ENCODE measurements at regions of chr22 and their contacts with region 1.

Region 1: GRCh38 chr22:31944700-31945474 is 552 bp downstream of the YWHAH start:
- DNase-seq: peak; percentile 65 to 78 (median 72)
- ATAC-seq: peak; percentile 67
- H3K4me3 ChIP-seq: peak overlapping the region; percentile 96
- H3K27ac ChIP-seq: peak overlapping the region; percentile 98
- H3K4me1 ChIP-seq: peaks cover 19 to 27% of the 10 kb centered on the region in 2 experiments
- H3K27me3 ChIP-seq: no peaks in the 10 kb centered on the region
- CTCF ChIP-seq: no peak
- EP300 ChIP-seq: no peak
- POLR2A ChIP-seq: no peak
- RAD21 ChIP-seq: no peak

Region 2: DNA sequence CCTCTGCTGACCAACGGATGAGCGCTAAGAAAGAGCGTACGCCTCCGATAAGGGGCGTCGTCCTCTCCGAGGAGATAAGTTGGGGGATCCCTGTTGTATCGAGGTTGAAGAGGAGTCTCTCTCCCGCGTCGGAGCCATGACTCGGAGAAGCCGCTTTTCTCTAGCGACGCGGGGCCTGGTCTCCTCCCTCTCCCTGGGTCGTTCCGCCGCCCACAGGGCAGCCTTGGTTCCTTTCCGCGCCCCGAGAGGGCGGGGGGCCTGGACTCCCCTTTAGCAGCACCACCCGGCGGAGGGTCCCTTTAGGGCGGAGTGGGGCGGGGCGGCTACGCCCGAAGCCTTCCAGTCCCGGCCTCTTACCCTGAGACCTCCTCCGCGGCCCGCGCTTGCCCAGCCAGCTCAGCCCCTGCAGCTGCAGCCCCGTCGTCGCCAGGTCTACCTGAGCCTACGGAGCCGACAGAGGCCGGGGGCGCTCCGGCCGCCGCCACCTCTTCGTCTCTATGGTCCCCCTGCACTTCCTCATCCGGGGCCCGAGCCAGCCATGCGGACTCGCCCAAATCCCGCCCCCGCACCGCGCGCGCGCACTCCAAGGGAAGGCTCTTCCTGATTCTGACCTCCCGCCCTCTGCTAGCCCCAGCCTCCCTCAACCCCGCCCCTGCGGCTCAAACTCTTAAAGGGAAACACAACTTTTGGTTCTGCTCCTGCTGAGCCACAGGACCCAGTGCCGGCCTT is 195.1 kb before region 1 on chr22 and contains the start of gene PRR14L:
- CTCF ChIA-PET with region 1: no interaction called
- POLR2A ChIA-PET with region 1: no interaction called
- in situ Hi-C with region 1: no loop called
- intact Hi-C with region 1: loop called (anchors 5 kb)
- DNase-seq: peak; percentile 82 to 97 (median 88)
- ATAC-seq: peak; percentile 79
- H3K4me3 ChIP-seq: peak within 1 kb of the TSS; percentile 90
- H3K27ac ChIP-seq: peak within 1 kb of the TSS; percentile 89
- H3K4me1 ChIP-seq: peaks cover 34 to 38% of the 10 kb centered on the region in 2 experiments
- H3K27me3 ChIP-seq: no peaks in the 10 kb centered on the region
- CTCF ChIP-seq: peak in 1 of 3 experiments; percentile 21; a peak in 1 of 6 replicates
- EP300 ChIP-seq: peak; percentile 32; the same call in 1 of the 2 replicates
- POLR2A ChIP-seq: peak; percentile 89
- RAD21 ChIP-seq: no peak
- polyA plus RNA-seq, gene PRR14L: 2.8 to 6.8 TPM

Region 3: GRCh38 chr22:31872209-31872608 is 72.7 kb before region 1 on chr22:
- CTCF ChIA-PET with region 1: interaction called, 7 read pairs
- POLR2A ChIA-PET with region 1: interaction called, 5 read pairs
- in situ Hi-C with region 1: loop called (anchors 5 kb)
- intact Hi-C with region 1: loop called (anchors 1 kb)
- DNase-seq: peak; percentile 39 to 76 (median 56)
- ATAC-seq: peak; percentile 95
- H3K4me3 ChIP-seq: no peak overlapping the region
- H3K27ac ChIP-seq: no peak overlapping the region
- H3K4me1 ChIP-seq: peaks cover 3 to 15% of the 10 kb centered on the region in 2 experiments; a peak in 3 of 5 replicates
- H3K27me3 ChIP-seq: no peaks in the 10 kb centered on the region
- CTCF ChIP-seq: peak; percentile 66 to 80 (median 74)
- EP300 ChIP-seq: no peak
- POLR2A ChIP-seq: no peak
- RAD21 ChIP-seq: peak; percentile 78 to 93

Region 4: DNA sequence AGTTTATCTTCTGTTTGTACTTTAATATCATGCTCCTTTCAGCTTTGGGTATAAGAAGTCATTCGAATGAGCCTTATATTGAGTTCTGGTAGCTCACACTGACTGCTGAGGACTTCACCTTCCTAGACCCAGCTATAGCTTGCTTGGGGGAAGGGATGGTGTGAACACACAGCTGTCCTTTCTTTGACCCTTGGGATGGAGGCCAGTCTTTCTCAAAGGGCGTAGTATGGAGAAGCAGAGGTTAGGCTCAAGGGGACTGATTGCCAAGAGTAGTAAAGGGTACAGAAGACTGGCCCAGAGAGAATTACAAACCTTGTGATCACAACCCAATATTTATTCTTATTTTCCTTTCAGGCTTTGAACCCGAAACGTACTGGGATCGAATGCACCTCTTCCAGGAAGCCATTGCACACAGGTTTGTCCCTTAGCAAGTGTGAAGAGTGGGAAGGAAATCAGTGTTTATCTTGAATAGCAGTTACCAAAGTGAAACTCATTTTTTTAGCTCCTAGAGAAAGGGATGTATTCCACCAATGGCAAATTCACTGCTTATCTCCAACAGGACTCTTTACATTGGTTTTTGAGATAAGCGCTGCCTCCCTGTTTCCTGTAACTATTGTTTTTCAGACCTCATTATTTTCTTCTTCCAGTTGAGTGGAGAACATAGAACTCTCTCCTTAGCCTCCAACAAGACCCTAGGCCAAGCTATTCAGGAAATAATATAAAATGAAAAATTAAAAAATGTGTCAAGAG is 43.3 kb before region 1 on chr22:
- CTCF ChIA-PET with region 1: no interaction called
- POLR2A ChIA-PET with region 1: interaction called, 3 read pairs
- in situ Hi-C with region 1: no loop called
- intact Hi-C with region 1: loop called (anchors 1 kb)
- DNase-seq: peak; percentile 51 to 77 (median 56)
- ATAC-seq: peak; percentile 75
- H3K4me3 ChIP-seq: no peak overlapping the region; the same call in 1 of the 2 replicates
- H3K27ac ChIP-seq: peak overlapping the region; percentile 73
- H3K4me1 ChIP-seq: peaks cover 33 to 44% of the 10 kb centered on the region in 2 experiments
- H3K27me3 ChIP-seq: no peaks in the 10 kb centered on the region
- CTCF ChIP-seq: no peak
- EP300 ChIP-seq: peak; percentile 81
- POLR2A ChIP-seq: no peak
- RAD21 ChIP-seq: no peak; a peak in 1 of 4 replicates

Region 5: GRCh38 chr22:32063701-32064100 is 118.8 kb after region 1 on chr22:
- CTCF ChIA-PET with region 1: no interaction called
- POLR2A ChIA-PET with region 1: no interaction called
- in situ Hi-C with region 1: no loop called
- intact Hi-C with region 1: no loop called
- DNase-seq: no peak
- ATAC-seq: no peak
- H3K4me3 ChIP-seq: no peak overlapping the region
- H3K27ac ChIP-seq: no peak overlapping the region
- H3K4me1 ChIP-seq: no peaks in the 10 kb centered on the region
- H3K27me3 ChIP-seq: peaks cover 0 to 5% of the 10 kb centered on the region in 2 experiments; a peak in 1 of 5 replicates
- CTCF ChIP-seq: no peak
- EP300 ChIP-seq: no peak
- POLR2A ChIP-seq: no peak
- RAD21 ChIP-seq: no peak